ENCODE measurements at regions of chr20 and their contacts with region 1.

Region 1: DNA sequence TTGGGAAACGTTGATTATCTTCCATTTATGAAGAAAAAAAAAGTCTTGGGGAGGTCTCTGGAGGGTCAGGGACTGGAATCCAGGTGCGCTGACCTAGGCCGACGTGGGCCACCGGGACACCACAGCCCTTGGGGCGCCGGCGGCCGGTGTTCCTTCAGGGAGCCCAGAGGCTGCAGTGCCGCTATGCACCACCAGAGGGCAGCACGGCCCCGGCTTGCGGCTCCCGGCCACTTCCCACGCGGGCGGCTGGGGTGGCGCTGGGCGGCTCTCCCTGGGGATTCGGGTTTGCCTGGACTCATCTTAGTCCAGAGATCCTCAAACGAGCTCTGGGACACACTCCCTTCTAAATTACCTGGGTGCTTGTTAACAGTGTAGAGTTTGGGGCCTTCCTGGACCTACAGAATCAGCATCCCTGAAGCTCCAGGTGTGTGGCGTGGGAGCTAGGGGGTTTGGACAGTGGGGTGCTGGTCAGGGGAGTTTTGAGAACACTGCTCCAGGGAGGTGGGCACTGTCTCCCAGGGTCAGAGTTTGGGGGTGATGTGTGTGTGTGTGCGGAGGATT is 23.0 kb upstream of the GTSF1L start:
- DNase-seq: peak; percentile 44 to 78
- ATAC-seq: peak; percentile 92 to 95
- H3K4me3 ChIP-seq: no peak overlapping the region
- H3K27ac ChIP-seq: peak overlapping the region; percentile 34 to 69; a peak in 5 of 6 replicates
- H3K4me1 ChIP-seq: peaks cover 7% of the 10 kb centered on the region; the same call in 2 of the 3 replicates
- CTCF ChIP-seq: peak; percentile 94
- EP300 ChIP-seq: no peak
- POLR2A ChIP-seq: no peak
- RAD21 ChIP-seq: peak; percentile 94 to 99

Region 2: DNA sequence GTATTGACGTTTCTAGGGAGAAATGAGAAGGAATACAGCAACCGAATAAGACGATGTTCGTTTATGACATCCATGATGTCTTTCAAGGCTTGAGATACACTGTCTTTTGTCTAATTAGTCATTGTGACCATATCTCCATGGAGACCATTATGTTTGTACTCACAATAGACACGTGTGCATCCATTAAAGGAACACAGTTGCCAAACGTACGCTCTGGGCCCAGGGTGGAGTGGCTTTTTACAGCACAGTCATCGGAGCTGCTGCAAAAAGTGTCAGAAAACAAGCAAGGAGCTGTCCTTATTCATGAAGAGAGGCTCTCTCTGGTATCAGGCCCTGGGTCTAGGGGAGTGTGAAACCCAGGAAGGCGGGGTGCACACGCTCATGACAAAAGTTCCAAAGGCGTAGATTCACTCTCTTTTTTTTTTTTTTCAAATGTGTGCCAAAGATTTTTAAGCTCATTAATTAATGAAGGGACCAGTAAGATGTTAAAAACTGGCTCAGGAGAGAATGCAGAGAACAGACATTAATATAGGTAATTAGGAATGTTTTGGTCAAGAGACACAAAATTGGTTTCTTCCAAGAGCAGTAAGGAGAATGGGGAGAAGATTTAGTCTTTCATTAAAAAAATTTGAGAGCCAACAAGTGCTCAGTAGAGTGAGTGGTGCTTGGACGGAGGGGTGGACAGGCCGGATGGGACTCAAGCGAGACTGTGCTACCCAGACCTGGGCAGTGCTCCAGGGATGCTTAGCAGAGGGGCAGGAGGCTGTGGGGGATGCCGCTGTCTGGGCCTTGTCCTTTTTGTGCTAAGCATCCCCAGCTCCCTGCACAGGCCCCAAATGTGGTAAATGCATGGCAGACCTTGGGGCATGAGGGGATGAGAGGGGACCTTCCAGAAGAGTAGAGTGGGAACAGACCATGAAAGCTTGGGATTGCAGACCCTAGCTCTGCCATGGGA is 11.8 kb after region 1 on chr20:
- CTCF ChIA-PET with region 1: interaction called, 43 read pairs
- POLR2A ChIA-PET with region 1: no interaction called
- DNase-seq: no peak
- ATAC-seq: peak in 1 of 2 experiments; percentile 19; a peak in 2 of 6 replicates
- H3K4me3 ChIP-seq: no peak overlapping the region
- H3K27ac ChIP-seq: no peak overlapping the region
- H3K4me1 ChIP-seq: no peaks in the 10 kb centered on the region
- CTCF ChIP-seq: no peak
- EP300 ChIP-seq: no peak
- POLR2A ChIP-seq: no peak
- RAD21 ChIP-seq: no peak

Region 3: DNA sequence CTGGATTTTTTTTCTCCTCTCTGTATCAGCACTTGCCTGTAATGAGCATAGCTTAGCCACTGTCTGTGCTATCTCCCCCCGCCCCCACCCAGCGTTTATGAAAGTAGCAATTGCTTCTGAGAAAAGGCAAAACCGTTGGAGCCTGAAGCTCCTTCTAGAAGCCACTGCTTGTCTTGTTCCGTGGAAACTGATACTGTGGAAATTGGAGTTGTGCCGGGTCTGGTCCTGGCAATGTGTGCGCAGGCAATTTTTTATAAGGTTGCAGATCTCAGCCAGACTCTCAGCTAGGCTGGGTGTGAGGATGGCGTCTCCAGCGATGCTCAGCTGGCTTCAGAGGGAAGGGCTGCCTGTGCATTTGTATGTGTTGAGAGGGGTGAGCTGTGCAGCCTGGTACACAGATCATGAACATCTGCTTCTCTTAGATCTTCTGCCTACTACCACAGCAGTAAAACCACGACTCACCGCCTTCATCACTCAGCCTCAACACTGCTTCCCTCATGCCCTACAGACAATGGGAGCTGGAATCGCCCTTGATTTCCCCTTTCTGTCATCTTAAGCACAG is 49.4 kb after region 1 on chr20:
- CTCF ChIA-PET with region 1: interaction called, 10 read pairs
- POLR2A ChIA-PET with region 1: no interaction called
- DNase-seq: no peak
- ATAC-seq: no peak
- H3K4me3 ChIP-seq: no peak overlapping the region
- H3K27ac ChIP-seq: no peak overlapping the region
- H3K4me1 ChIP-seq: no peaks in the 10 kb centered on the region
- CTCF ChIP-seq: no peak
- EP300 ChIP-seq: no peak
- POLR2A ChIP-seq: no peak
- RAD21 ChIP-seq: no peak

Region 4: GRCh38 chr20:43863330-43863729 is 113.5 kb after region 1 on chr20:
- CTCF ChIA-PET with region 1: no interaction called
- POLR2A ChIA-PET with region 1: no interaction called
- DNase-seq: no peak
- ATAC-seq: no peak
- H3K4me3 ChIP-seq: no peak overlapping the region
- H3K27ac ChIP-seq: no peak overlapping the region
- H3K4me1 ChIP-seq: no peaks in the 10 kb centered on the region
- CTCF ChIP-seq: no peak
- EP300 ChIP-seq: 0 out of 5 replicates have a peak, but pooled peaks of 1 of the 2 experiments have one; percentile 13
- POLR2A ChIP-seq: no peak
- RAD21 ChIP-seq: no peak

Region 5: DNA sequence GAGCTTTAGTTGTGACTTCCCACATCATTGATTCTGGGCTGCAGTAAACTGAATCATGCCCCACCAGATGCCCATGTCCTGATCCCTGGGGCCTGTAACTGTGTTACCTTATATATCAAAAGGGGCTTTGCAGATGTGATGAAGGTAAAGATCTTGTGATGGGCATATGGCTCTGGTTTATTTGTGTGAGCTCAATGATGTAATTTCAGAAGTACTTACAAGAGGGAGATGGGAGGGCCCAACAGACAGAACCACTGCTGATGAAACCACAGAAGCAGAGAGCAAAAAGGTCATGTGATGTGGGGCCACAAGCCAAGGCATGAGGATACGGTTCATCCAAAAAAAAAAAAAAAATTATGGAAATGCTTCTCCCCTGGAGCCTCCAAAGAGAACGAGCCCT is 283.5 kb after region 1 on chr20:
- CTCF ChIA-PET with region 1: interaction called, 12 read pairs
- POLR2A ChIA-PET with region 1: no interaction called
- DNase-seq: no peak
- ATAC-seq: no peak
- H3K4me3 ChIP-seq: no peak overlapping the region
- H3K27ac ChIP-seq: peak overlapping the region; percentile 28 to 48; a peak in 2 of 6 replicates
- H3K4me1 ChIP-seq: peaks cover 4% of the 10 kb centered on the region; the same call in 2 of the 3 replicates
- CTCF ChIP-seq: no peak
- EP300 ChIP-seq: no peak
- POLR2A ChIP-seq: no peak
- RAD21 ChIP-seq: no peak

Region 6: GRCh38 chr20:44068316-44069201 is 318.7 kb after region 1 on chr20:
- CTCF ChIA-PET with region 1: interaction called, 11 read pairs
- POLR2A ChIA-PET with region 1: interaction called, 3 read pairs
- DNase-seq: no peak
- ATAC-seq: no peak
- H3K4me3 ChIP-seq: no peak overlapping the region
- H3K27ac ChIP-seq: no peak overlapping the region
- H3K4me1 ChIP-seq: no peaks in the 10 kb centered on the region
- CTCF ChIP-seq: no peak
- EP300 ChIP-seq: no peak
- POLR2A ChIP-seq: no peak
- RAD21 ChIP-seq: no peak

Region 7: GRCh38 chr20:44087051-44087856 is 337.4 kb after region 1 on chr20:
- CTCF ChIA-PET with region 1: interaction called, 210 read pairs
- POLR2A ChIA-PET with region 1: no interaction called
- DNase-seq: no peak
- ATAC-seq: no peak
- H3K4me3 ChIP-seq: no peak overlapping the region
- H3K27ac ChIP-seq: no peak overlapping the region
- H3K4me1 ChIP-seq: peaks cover 3% of the 10 kb centered on the region; the same call in 1 of the 3 replicates
- CTCF ChIP-seq: no peak
- EP300 ChIP-seq: no peak
- POLR2A ChIP-seq: no peak
- RAD21 ChIP-seq: no peak